ENCODE measurements at regions of chr11 and their contacts with region 1.

Region 1: DNA sequence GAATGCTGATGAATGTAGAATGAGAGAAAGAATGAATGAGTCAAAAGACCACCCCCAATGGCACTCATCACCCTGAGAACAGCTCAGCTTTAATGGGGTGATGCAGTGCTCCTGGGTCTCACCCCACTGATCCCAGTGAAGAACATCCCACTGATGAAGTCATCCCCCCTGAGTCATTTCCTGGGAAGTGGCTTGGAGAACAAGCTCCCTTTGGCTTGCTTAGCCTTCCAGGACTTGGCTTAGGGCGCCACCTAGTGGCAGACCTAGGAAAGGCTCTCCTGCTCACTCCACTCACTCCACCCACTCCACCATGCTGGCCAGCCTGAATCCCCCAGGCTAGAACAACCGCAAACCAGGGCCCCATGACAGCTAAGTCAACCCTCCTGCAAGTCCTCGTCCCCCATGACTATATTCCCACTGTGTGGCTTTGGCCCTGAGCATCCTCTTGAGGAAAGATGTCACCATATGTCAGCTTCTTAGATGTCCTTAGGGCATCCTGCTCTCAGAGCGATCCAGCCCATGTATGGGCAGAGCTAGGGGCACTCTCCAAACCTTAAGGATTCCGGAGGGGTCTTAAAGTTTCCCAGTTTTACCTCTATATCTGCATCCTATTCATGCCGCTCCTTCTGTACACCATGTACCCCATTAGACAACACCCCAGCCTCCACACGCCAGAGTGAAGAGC is 17.8 kb upstream of the TMPRSS13 start:
- DNase-seq: peak; percentile 88
- H3K4me3 ChIP-seq: no peak overlapping the region
- H3K27ac ChIP-seq: peak overlapping the region; percentile 9
- H3K4me1 ChIP-seq: peaks cover 18% of the 10 kb centered on the region
- H3K27me3 ChIP-seq: peaks cover 4 to 9% of the 10 kb centered on the region in 2 experiments
- CTCF ChIP-seq: peak; percentile 91 to 94
- POLR2A ChIP-seq: no peak

Region 2: DNA sequence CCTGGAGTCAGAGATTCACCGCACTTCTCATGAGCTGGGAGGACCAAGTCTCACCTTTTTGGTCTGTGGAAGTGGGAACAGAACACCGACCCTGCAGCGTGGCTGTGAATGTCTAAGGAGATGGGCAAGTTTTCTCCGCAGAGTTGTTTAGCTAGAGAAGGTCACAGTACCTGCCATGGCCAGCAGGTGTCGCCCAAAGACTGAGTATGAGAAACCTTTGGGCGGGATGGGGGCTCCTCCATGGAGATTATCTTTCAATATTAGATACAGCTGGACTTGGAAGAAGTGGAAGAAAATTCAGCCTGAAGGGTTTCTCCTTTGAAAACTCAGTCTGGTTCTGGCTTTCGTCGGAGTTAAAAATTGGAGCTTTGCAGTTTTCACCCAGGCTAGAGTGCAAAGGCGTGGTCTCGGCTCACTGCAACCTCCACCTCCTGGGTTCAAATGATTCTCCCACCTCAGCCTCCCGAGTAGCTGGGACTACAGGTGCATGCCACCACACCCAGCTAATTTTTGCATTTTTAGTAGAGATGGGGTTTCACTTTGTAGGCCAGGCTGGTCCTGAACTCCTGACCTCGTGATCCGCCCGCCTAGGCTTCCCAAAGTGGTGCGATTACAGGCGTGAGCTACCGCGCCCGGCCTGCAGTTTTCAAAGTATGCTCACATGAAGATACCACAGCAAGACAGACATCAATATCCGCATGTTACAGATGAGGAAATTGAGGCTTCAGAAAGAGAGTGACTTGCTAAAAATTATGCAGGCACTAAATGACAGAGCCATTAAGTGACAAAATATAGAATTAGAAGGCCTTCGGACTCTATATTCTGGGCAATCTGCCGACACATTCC is 139.3 kb before region 1 on chr11:
- CTCF ChIA-PET with region 1: interaction called, 203 read pairs
- POLR2A ChIA-PET with region 1: no interaction called
- dilution Hi-C with region 1: no loop called
- intact Hi-C with region 1: loop called (anchors 1 kb)
- DNase-seq: peak; percentile 47
- H3K4me3 ChIP-seq: no peak overlapping the region
- H3K27ac ChIP-seq: no peak overlapping the region
- H3K4me1 ChIP-seq: no peaks in the 10 kb centered on the region
- H3K27me3 ChIP-seq: peaks cover 1 to 5% of the 10 kb centered on the region in 2 experiments
- CTCF ChIP-seq: peak; percentile 81 to 92
- POLR2A ChIP-seq: no peak

Region 3: DNA sequence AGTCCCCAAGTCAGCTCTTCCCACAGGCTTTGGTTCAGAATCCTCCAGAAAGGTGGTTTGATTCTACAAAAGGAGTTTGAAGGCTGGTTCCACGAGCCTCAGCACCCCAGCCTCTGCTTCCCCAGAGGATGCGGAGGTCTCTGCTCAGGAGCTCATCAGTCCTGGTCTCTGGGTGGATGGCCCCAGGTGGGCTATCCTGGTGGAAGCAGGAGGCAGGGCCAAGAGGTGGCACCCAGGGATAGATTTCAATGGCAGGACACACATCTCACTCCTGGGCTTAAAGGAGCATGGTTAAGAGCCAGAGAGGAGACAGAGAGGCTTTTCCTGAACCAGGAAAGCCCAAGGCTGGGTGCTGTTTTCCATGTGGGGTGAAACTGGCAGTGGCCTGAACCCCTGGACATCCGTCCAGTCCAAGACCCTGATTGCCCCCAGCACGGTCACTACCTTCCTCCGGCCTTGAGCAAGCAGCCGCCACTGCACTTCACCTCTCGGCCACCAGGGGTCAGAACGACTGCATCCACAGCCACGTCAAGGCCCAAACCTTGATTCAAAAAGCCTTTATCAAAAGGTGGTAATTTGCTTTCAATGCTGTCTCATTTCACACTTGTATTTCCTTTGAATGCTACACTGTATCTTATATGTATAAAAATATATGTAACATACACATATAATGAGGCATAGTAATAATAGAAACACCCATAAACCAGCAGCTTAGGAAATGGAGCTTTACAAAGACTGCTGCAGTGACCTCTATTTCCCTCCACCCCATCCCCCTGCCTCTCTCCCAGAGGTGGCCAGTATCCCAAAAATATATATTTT is 103.1 kb before region 1 on chr11:
- CTCF ChIA-PET with region 1: interaction called, 229 read pairs
- POLR2A ChIA-PET with region 1: no interaction called
- dilution Hi-C with region 1: no loop called
- intact Hi-C with region 1: loop called (anchors 1 kb)
- DNase-seq: peak; percentile 69
- H3K4me3 ChIP-seq: no peak overlapping the region
- H3K27ac ChIP-seq: no peak overlapping the region
- H3K4me1 ChIP-seq: no peaks in the 10 kb centered on the region
- H3K27me3 ChIP-seq: peaks cover 0 to 2% of the 10 kb centered on the region in 2 experiments
- CTCF ChIP-seq: peak; percentile 92 to 95
- POLR2A ChIP-seq: no peak

Region 4: GRCh38 chr11:117919781-117920221 is 27.2 kb before region 1 on chr11:
- CTCF ChIA-PET with region 1: interaction called, 13 read pairs
- POLR2A ChIA-PET with region 1: no interaction called
- dilution Hi-C with region 1: no loop called
- intact Hi-C with region 1: no loop called
- DNase-seq: no peak
- H3K4me3 ChIP-seq: no peak overlapping the region
- H3K27ac ChIP-seq: no peak overlapping the region
- H3K4me1 ChIP-seq: no peaks in the 10 kb centered on the region
- H3K27me3 ChIP-seq: no peaks in the 10 kb centered on the region
- CTCF ChIP-seq: no peak
- POLR2A ChIP-seq: no peak

Region 5: DNA sequence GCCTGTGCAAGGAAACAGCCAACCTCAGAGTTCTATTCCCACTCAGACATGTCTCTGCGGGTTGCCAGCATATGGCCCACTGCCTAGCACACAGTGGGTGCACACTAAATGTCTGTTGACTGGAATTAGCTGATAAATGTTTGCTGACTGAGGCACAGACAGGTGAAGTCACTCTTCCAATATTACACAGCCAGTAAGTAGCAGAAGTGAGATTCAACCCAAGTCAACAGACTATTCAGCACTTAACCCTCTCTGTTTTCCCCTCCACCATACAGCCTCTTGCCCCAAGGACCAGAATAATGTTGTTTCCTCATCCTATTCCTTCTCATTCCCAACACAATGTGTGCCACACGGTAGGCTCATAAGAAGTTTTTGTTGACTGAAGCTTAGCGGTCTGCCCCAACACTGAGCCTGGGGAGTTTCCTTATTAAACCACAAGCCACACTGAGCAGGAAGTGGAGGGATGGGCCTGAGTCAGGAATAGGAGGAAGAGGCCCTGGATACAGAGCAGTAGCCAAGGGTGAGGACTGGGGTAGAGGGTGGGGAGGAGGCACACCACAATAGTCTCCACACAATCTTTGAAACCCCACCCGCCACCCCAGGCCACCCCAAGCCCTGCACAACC is 23.5 kb after region 1 on chr11:
- CTCF ChIA-PET with region 1: interaction called, 32 read pairs
- POLR2A ChIA-PET with region 1: no interaction called
- dilution Hi-C with region 1: no loop called
- intact Hi-C with region 1: loop called (anchors 2 kb)
- DNase-seq: peak; percentile 50
- H3K4me3 ChIP-seq: no peak overlapping the region
- H3K27ac ChIP-seq: no peak overlapping the region
- H3K4me1 ChIP-seq: peaks cover 28% of the 10 kb centered on the region
- H3K27me3 ChIP-seq: no peaks in the 10 kb centered on the region
- CTCF ChIP-seq: no peak
- POLR2A ChIP-seq: no peak

Region 6: DNA sequence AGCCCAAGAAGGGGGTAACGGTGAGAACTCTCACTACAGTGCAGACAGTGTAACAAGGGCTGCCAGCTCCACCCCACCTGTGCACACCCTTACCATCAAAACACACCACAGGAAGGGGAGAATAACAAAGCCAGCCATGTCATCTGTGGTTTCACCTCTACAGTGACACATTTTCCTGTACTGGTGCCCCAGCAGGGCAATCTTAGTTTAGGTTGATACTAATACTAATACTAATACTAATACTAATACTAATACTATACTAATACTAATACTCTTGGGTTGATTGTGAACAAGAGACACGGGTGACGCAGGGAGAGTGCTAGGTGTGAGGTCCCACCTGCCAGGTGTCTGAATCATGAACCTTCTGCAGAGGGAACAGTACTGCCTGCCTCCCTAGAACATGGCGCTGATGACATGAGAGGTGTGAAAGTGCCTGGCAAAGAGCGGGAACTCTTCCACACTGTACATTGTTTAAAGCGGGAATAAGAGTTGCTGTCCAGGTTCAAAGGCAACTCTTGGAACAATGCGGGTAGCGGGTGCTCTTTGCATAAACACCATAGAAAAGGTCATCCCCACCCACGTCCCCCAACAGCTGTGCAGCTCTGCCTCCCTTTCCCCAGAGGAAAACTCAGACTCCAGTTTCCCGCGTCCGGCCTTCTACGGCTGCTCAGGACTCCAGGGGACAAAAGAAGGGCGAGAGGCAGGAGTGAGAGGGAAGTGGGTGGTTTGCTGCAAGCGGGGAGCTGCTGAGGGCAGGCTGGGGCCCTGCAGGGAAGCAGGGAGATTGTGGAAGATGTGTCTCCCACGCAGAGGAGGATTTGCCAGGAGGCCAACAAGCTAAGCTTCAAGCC is 104.9 kb after region 1 on chr11:
- CTCF ChIA-PET with region 1: interaction called, 92 read pairs
- POLR2A ChIA-PET with region 1: no interaction called
- dilution Hi-C with region 1: no loop called
- intact Hi-C with region 1: loop called (anchors 1 kb)
- DNase-seq: no peak
- H3K4me3 ChIP-seq: no peak overlapping the region
- H3K27ac ChIP-seq: no peak overlapping the region
- H3K4me1 ChIP-seq: no peaks in the 10 kb centered on the region
- H3K27me3 ChIP-seq: peaks cover 5 to 7% of the 10 kb centered on the region in 2 experiments
- CTCF ChIP-seq: no peak
- POLR2A ChIP-seq: no peak

Measured in endothelial cell of umbilical vein (primary cell).